Vagina (tissue), 2 donors: ENCODE measurements at regions of chr5 and their contacts with region 1.

Region 1: DNA sequence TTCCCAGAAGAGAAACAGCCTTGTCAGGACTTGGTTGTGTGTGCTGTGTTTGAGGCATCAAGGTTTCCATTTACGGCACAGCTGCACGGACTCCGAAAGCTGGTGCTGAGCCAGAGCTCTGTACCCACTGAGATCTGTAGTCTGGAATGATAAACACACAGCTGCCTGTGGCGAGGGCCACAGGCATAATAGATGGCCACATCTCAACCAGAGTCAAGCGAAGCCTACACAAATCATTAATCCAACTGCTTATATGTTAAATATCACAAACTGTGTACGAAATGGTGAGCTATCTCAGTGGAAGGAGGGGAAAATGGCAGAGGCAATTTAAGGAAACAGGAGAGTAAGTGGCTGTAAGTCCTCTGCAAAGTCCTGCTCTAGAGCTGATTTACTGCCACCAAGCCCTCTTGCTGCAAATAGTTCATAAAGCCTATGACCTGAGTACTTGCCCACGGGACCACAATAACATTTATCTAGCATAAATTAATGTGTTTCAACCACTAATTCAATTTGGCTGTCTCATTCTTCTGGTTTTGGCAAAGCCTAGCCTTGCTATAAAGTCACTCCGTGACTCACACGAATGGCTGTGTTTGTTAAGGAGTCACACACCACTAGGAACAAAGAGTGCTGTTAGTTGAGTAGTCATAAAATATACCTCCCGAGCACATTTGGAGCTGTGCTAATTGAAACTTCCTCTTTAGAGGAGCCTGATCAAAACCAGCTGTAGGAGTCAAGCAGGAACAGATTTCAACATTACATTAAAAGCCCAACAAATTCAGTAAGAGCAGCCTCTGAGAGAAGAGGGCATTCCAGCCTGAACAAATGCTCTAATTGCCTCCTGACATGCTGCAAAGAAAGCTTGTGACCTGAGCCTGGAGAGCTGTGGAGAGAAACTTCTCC is 738.6 kb upstream of the ZNF608 start:
- DNase-seq: peak in 1 of 2 donors; percentile 95
- H3K4me3 ChIP-seq: peak overlapping the region in 1 of 2 donors; percentile 29
- H3K27ac ChIP-seq: peak overlapping the region; percentile 67
- H3K4me1 ChIP-seq: peaks cover 47% of the 10 kb centered on the region
- H3K27me3 ChIP-seq: no peaks in the 10 kb centered on the region
- CTCF ChIP-seq: no peak
- POLR2A ChIP-seq: no peak

Region 2: GRCh38 chr5:124519396-124519795 is 965.6 kb before region 1 on chr5:
- intact Hi-C with region 1: loop called (anchors 5 kb)
- DNase-seq: no peak
- H3K4me3 ChIP-seq: no peak overlapping the region
- H3K27ac ChIP-seq: no peak overlapping the region
- H3K4me1 ChIP-seq: peaks cover 4% of the 10 kb centered on the region
- H3K27me3 ChIP-seq: no peaks in the 10 kb centered on the region
- CTCF ChIP-seq: no peak
- POLR2A ChIP-seq: no peak

Region 3: DNA sequence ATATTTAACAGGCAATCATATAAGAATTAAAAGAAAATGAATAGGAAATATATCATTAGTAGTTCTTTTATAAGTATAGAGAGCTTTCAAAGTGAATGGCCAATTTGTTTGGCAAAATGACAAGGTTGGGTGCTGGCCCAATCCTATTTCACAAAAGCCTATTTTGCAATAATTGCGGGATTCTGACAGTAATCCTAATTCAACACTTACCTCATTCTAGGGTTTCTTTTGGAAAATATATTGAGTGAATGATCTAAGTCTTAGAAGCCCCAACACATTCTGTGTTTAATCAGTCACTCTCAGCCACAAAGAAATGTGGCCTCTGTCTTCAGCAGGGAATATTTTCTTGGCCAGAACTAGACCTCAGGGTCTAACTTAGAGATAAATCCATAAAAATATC is 97.4 kb after region 1 on chr5:
- intact Hi-C with region 1: loop called (anchors 5 kb)
- DNase-seq: no peak
- H3K4me3 ChIP-seq: no peak overlapping the region
- H3K27ac ChIP-seq: no peak overlapping the region
- H3K4me1 ChIP-seq: peaks cover 33% of the 10 kb centered on the region
- H3K27me3 ChIP-seq: no peaks in the 10 kb centered on the region
- CTCF ChIP-seq: no peak
- POLR2A ChIP-seq: no peak

Region 4: GRCh38 chr5:125743939-125744338 is 258.9 kb after region 1 on chr5:
- intact Hi-C with region 1: no loop called
- DNase-seq: no peak
- H3K4me3 ChIP-seq: no peak overlapping the region
- H3K27ac ChIP-seq: no peak overlapping the region
- H3K4me1 ChIP-seq: no peaks in the 10 kb centered on the region
- H3K27me3 ChIP-seq: no peaks in the 10 kb centered on the region
- CTCF ChIP-seq: no peak
- POLR2A ChIP-seq: no peak